Esophagus muscularis mucosa (tissue), 4 donors: ENCODE measurements at regions of chr11 and their contacts with region 1.

Region 1: GRCh38 chr11:113289431-113290187 is 24.8 kb upstream of the TTC12 start:
- DNase-seq: no peak
- H3K4me3 ChIP-seq: no peak overlapping the region
- H3K27ac ChIP-seq: no peak overlapping the region
- H3K4me1 ChIP-seq: peaks cover 0 to 8% (median 0%) of the 10 kb centered on the region in 4 donors
- H3K27me3 ChIP-seq: peaks cover 0 to 13% (median 0%) of the 10 kb centered on the region in 4 donors
- CTCF ChIP-seq: peak; percentile 85 to 95 (median 88)
- EP300 ChIP-seq: no peak
- POLR2A ChIP-seq: no peak

Region 2: DNA sequence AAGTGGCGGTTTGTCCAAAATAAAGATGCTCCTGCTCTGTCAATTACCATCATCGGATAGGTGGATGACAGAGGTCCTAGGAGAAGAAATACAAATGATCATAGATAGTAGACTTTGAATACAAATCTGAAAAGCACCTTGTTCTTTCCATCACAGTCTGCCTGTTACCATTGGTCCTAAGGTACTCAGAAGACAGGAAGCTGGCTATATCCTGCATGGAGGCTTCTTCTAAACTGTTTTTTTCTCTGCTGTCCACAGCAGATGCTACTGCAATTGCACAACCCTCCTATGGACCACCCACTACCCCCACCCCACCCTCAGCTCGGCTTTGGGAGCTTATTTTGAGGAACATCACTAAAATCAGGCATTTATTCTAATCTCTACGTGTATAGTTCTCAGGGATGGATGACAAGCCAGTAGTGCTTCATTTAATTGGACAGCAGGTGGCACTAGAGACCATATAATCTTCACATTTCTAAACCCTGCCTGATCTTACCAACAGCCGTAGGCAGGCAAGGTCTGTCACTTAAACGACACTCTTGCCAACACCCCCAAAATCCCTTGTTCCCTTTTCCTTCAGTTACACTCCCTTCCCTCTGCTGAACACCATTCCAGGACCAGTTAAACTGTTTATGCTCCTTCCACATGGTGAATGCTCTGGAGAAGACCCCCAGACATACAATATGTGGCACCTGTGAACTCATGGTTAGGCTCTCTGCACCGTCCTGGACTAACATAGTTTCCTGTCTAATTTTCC is 1070.0 kb before region 1 on chr11:
- intact Hi-C with region 1: loop called (anchors 10 kb)
- DNase-seq: no peak
- H3K4me3 ChIP-seq: no peak overlapping the region
- H3K27ac ChIP-seq: no peak overlapping the region
- H3K4me1 ChIP-seq: peaks cover 0 to 28% (median 16%) of the 10 kb centered on the region in 4 donors
- H3K27me3 ChIP-seq: no peaks in the 10 kb centered on the region
- CTCF ChIP-seq: peak; percentile 77 to 90 (median 88)
- EP300 ChIP-seq: no peak
- POLR2A ChIP-seq: no peak

Region 3: DNA sequence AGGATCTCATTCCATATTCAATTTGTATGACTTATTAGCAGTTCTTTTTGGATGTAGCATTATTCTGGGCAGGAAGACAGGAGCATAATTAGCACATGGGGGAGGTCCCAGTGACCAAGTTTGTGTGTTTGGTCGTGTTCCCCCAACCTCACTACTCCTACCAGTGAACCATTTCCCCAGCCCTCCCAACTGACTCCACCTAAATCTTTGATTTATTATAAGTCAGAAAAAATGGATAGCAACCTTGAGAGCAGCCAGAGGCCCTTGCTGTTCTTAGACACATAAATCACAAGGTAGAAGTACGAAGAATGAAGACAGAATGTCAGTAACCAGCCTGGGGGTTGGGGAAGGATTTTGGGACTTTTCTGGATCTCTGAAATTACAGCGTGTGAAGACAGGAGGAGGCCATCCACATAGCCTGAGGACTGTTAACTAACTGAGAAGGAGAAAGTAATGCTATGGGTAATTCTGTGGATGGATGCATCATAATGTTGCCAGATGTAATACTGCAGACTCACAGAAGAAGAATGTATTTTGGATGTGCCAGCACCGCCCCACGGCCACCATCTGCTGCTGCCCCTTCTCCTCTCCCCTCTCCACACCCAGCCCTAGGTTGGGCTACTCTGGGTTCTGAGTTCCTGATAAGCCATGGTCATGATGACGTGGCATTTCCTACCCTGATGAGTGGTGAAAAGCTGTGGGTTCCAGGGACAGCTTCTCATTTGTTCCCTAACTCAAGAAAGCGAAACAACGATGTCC is 99.5 kb before region 1 on chr11:
- intact Hi-C with region 1: no loop called
- DNase-seq: no peak
- H3K4me3 ChIP-seq: no peak overlapping the region
- H3K27ac ChIP-seq: no peak overlapping the region
- H3K4me1 ChIP-seq: peaks cover 34 to 48% (median 41%) of the 10 kb centered on the region in 4 donors
- H3K27me3 ChIP-seq: no peaks in the 10 kb centered on the region
- CTCF ChIP-seq: no peak
- EP300 ChIP-seq: no peak
- POLR2A ChIP-seq: no peak